ENCODE measurements at regions of chr17 and their contacts with region 1.

Region 1: DNA sequence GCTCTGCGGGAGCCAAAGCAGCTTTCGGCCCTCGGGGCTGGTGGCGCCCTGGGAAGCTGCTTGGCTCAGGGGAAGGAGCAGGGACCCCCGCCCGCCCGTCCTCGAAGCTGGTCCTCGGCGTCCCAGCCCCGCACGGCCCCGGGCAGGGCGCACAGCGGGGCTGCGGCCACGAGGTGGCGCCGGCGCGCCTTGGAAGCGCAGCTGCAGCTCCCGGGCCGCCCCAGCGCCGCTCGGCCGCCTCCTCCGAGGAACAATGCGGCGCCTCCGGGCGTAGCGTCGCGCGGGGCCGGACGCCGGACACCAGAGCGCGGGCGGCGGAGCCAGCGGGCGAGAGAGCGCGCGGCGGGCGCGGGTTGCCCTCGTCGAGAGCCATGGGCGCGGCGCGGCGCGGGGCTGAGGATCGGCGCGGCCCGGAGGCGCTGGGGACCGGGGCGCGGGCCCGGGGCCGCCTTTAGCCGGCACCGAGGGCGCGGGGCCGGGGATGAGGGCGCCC is at the start of gene MGAT5B:
- DNase-seq: peak; percentile 88
- ATAC-seq: peak; percentile 99
- total RNA-seq, gene MGAT5B: not detected

Region 2: DNA sequence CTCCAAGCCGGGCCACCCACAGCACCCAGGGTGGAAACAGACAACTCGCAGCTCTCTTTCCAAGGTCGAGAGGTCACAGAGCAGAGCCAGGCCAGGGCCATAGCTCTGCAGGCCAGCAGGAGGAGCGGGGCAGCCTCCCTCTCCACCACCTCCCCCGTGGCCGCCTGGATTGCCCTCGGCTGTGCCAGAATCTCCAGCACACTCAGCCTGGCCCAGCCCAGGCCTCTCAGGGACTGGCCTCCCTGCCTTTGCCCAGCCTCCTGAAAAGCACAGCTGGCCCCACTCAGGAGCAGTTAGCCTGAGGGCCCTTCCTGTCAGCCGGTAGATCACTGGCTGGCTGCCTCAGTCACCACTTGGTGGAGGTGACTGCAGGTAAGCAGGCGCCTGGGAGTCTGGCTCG is 186.7 kb after region 1 on chr17:
- intact Hi-C with region 1: loop called (anchors 5 kb)
- DNase-seq: no peak
- ATAC-seq: no peak

Region 3: DNA sequence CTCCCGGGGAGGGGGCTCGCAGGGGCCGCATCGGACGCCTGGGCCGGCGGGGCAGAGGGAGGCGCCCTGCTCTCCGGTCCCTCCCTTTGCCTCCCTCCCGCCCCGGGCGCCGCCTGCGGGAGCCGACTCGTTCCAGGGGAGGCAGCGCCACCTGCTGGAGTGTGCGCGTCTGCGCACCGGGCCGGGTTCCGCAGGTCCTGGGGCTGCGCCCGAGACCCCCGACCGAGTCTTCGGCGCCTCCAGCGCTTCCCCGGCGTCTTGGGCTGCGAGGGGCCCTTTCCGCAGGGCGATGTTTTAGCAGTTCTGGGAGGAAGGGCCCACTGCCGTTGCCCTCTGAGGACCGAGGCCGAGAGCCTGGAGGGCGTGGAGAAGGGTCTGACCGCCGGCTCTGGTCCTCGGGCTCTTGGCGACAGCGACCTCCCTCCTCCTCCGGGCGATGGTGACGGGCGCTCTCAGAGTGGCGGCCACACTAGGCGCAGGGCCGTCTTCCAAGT is 378.9 kb after region 1 on chr17:
- intact Hi-C with region 1: loop called (anchors 10 kb)
- DNase-seq: peak; percentile 93
- ATAC-seq: peak; percentile 97

Measured in Right ventricle myocardium superior (tissue), 1 donor.